Dorsolateral prefrontal cortex (tissue), 120 donors: ENCODE measurements at regions of chr7 and their contacts with region 1.

Region 1: DNA sequence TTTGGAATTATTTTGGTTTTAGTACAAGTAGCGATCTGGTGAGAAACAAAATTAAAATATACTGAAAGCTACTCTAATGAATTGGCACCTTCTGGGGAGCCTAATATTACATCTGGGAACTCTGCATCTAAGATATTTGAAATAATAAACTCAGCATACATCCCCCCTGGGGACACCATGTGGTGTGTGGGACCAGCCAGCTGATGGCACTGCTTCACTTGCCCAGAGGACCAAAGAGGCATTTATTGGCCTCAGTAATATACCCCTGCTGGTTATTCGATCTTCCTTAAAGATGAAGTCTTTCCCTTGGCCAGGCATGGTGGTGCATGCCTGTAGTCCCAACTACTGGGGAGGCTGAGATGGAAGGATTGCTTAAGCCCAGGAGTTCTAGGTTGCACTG is 195.1 kb upstream of the AUTS2 start:
- DNase-seq: peak in 1 of 10 donors; percentile 37
- H3K4me3 ChIP-seq: no peak overlapping the region
- H3K27ac ChIP-seq: no peak overlapping the region
- H3K27me3 ChIP-seq: no peaks in the 10 kb centered on the region
- CTCF ChIP-seq: peak in 44 of 56 donors; percentile 17 to 68 (median 40)

Region 2: GRCh38 chr7:69365651-69366192 is 37.4 kb before region 1 on chr7:
- intact Hi-C with region 1: no loop called
- DNase-seq: no peak
- H3K4me3 ChIP-seq: no peak overlapping the region
- H3K27ac ChIP-seq: no peak overlapping the region
- H3K27me3 ChIP-seq: no peaks in the 10 kb centered on the region
- CTCF ChIP-seq: no peak

Region 3: DNA sequence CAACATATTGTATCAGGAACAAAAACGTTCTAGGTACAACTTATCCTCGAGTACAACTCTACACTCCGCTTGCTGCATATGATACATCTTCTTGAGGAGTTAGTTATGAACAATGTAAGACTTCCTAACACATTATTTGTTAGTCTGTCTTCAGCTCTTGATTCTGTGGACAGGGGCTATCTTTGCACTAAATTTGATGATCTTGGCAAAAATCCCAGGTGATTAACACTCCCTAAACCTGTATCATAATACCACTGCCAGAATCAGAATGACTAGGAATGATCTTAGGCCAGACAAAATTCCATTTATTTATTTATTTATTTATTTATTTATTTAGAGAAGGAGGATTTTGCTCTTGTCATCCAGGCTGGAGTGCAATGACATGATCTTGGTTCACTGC is 86.4 kb after region 1 on chr7:
- intact Hi-C with region 1: no loop called
- DNase-seq: no peak
- H3K4me3 ChIP-seq: no peak overlapping the region
- H3K27ac ChIP-seq: no peak overlapping the region
- H3K27me3 ChIP-seq: peaks cover 0 to 5% (median 0%) of the 10 kb centered on the region in 45 donors
- CTCF ChIP-seq: no peak

Region 4: DNA sequence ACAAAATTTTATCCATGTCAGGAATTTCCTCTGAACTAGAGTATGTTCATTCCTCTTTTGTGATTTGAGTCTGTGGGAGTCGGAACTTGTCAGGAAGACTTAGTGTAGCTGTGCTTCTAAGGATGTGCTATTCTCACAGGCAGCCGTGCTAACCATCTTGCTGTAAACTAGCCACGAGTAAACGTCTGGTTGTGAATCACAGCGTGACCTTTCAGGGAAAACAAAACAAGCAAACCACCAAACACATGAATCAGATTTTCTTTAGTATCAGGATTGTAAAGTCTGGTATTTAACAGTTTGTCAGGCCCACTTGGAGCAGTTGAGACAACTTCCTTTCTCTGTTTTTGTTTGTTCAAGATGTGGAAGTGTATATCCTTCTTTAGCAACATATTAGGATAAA is 227.1 kb after region 1 on chr7:
- intact Hi-C with region 1: no loop called
- DNase-seq: no peak
- H3K4me3 ChIP-seq: no peak overlapping the region
- H3K27ac ChIP-seq: no peak overlapping the region
- H3K27me3 ChIP-seq: no peaks in the 10 kb centered on the region
- CTCF ChIP-seq: no peak

Region 5: GRCh38 chr7:69825113-69825616 is 422.0 kb after region 1 on chr7:
- intact Hi-C with region 1: loop called in 1 of 2 experiments (anchors 10 kb)
- DNase-seq: no peak
- H3K4me3 ChIP-seq: peak overlapping the region in 1 of 59 donors; percentile 6
- H3K27ac ChIP-seq: no peak overlapping the region
- H3K27me3 ChIP-seq: no peaks in the 10 kb centered on the region
- CTCF ChIP-seq: peak in 36 of 56 donors; percentile 12 to 68 (median 40)